ENCODE measurements at regions of chrX and their contacts with region 1.

Region 1: DNA sequence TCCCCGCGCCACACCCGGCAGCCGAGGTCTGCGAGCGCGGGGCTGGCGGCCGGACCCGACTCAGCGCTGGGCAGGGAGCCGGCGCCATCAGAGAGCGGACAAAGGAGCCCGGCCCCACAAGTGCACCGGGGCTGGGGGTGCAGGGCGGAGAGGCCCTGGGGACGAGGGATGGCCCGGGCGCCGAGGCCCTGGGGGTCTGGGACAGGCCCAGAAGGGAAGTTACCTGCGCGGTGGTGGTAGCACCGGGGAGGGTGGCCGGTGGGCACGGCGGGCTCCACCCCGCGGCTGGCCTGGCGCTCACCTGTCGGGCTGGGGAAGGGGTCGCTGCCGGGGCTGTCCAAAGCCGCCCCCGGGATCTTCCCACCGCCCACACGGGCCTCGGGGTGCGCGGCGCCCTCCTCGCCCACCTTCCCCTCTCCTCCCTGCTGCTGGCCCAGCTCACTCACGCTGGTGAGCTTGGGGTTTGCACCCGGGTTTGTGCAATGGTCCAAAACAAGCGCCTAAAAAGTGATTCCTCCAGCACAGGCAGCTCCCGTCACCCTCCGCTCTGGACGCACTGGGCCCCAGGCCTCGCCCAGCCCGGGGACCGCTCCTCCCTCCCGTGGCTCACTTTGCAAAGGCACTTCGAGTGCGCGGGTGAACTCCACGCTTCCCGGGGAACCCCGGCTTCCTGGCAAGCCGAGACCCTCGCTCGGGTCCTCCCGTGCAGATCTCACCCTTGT is at the start of gene CTPS2:
- DNase-seq: peak; percentile 39
- ATAC-seq: peak; percentile 96
- H3K4me3 ChIP-seq: peak within 1 kb of the TSS; percentile 77 to 81 (median 77)
- H3K27ac ChIP-seq: peak within 1 kb of the TSS; percentile 90
- H3K4me1 ChIP-seq: peaks cover 32% of the 10 kb centered on the region
- H3K27me3 ChIP-seq: no peaks in the 10 kb centered on the region; a peak in 1 of 5 replicates
- CTCF ChIP-seq: no peak
- EP300 ChIP-seq: no peak
- POLR2A ChIP-seq: peak; percentile 59 to 66; a peak in 3 of 4 replicates
- RAD21 ChIP-seq: no peak
- total RNA-seq, gene CTPS2: 26.1 and 32.2 TPM in 2 replicates

Region 2: DNA sequence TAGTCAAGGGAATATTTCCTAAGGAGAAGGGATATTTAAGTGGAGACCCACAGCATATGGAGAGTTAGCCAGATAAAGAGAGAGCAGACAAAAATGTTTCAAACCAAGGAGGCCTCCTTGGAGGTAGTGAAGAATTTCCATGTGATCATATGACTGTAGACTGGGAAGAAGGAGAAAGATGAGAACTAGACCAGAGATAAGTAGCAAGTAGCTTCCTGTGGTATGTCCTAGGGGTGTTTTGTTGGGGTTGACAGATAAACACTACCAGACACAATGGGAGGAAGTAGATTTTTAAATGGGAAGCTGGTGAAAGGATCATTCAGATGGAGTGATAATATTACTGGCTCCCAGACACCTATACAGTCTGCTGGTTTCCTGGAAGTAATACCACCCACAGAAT is 20.7 kb after region 1 on chrX:
- CTCF ChIA-PET with region 1: no interaction called
- POLR2A ChIA-PET with region 1: no interaction called
- in situ Hi-C with region 1: no loop called
- intact Hi-C with region 1: no loop called
- DNase-seq: no peak
- ATAC-seq: no peak
- H3K4me3 ChIP-seq: no peak overlapping the region
- H3K27ac ChIP-seq: no peak overlapping the region
- H3K4me1 ChIP-seq: no peaks in the 10 kb centered on the region
- H3K27me3 ChIP-seq: no peaks in the 10 kb centered on the region
- CTCF ChIP-seq: no peak
- EP300 ChIP-seq: no peak
- POLR2A ChIP-seq: no peak
- RAD21 ChIP-seq: no peak

Region 3: DNA sequence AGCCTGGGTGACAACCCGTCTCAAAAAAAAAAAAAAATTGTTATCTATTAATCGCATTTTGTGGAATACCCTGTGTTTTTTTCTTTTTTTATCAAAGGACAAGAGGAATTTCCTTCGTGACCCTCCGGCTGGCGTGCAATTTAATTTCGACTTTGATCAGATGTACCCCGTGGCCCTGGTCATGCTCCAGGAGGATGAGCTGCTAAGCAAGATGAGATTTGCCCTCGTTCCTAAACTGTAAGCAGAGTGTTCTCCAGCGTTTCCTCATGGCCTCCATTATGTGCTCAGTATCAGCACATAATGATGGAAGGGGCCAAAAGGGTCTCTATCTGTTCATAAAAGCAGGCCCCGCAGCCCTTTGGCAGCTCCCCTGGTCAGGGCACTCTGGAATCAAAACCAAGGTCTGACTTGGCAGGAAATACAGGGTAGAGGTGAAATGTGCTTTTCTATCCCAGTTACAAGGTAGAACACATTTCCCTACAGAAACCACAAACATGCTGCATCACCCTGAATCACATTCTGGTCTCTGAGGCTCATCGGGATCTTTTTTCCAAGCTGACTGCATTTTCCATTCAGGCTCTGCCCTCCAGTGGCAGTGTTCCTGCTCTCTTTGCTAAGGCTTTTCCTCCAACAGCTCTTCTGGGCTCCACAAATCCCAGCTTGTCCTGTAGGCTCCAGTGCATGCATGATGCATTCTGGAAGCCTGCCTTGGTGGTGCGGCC is 31.5 kb after region 1 on chrX:
- CTCF ChIA-PET with region 1: no interaction called
- POLR2A ChIA-PET with region 1: interaction called, 10 read pairs
- in situ Hi-C with region 1: no loop called
- intact Hi-C with region 1: no loop called
- DNase-seq: no peak
- ATAC-seq: peak; percentile 34; the same call in 2 of the 3 replicates
- H3K4me3 ChIP-seq: no peak overlapping the region
- H3K27ac ChIP-seq: no peak overlapping the region
- H3K4me1 ChIP-seq: peaks cover 32% of the 10 kb centered on the region
- H3K27me3 ChIP-seq: no peaks in the 10 kb centered on the region
- CTCF ChIP-seq: peak; percentile 42; the same call in 1 of the 2 replicates
- EP300 ChIP-seq: no peak
- POLR2A ChIP-seq: no peak
- RAD21 ChIP-seq: no peak

Measured in HepG2 (cell line).